ENCODE measurements at regions of chr2 and their contacts with region 1.

Region 1: GRCh38 chr2:85215448-85216401 is 82.5 kb downstream of the TCF7L1 start:
- DNase-seq: peak in 1 of 5 donors; percentile 41
- ATAC-seq: peak in 2 of 4 donors; percentile 55 to 62
- H3K4me3 ChIP-seq: no peak overlapping the region
- H3K27ac ChIP-seq: peak overlapping the region in 1 of 12 donors; percentile 65
- H3K4me1 ChIP-seq: peaks cover 0 to 45% (median 19%) of the 10 kb centered on the region in 12 donors
- H3K27me3 ChIP-seq: no peaks in the 10 kb centered on the region
- CTCF ChIP-seq: no peak
- POLR2A ChIP-seq: no peak

Region 2: DNA sequence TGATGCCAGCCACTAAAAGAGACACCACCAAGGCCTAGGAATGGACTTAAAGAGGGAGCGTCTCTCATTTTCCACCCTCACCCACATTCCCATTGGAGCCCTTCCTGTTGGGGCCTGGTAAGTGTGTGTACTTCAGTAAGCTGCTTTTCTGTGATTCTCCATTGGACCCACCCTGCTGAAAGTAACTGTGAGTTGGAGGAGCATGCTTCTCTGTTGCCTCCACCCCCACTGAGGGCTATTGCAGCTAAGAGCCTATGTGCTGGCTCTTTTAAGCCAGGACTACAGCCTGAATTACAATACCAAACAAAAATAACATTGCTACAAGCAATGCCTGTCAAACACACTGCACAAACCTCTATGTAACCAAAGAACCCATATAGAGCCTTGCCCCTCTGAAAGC is 416.0 kb before region 1 on chr2:
- intact Hi-C with region 1: loop called in 1 of 10 experiments (anchors 10 kb)
- DNase-seq: no peak
- ATAC-seq: no peak
- H3K4me3 ChIP-seq: no peak overlapping the region
- H3K27ac ChIP-seq: no peak overlapping the region
- H3K4me1 ChIP-seq: no peaks in the 10 kb centered on the region
- H3K27me3 ChIP-seq: no peaks in the 10 kb centered on the region
- CTCF ChIP-seq: no peak
- POLR2A ChIP-seq: no peak

Region 3: GRCh38 chr2:85132834-85133637 is 82.7 kb before region 1 on chr2 and contains the start of gene TCF7L1:
- intact Hi-C with region 1: no loop called
- DNase-seq: peak; percentile 82 to 91 (median 88)
- ATAC-seq: peak; percentile 95 to 97 (median 96)
- H3K4me3 ChIP-seq: peak within 1 kb of the TSS; percentile 61 to 99 (median 82)
- H3K27ac ChIP-seq: peak within 1 kb of the TSS; percentile 38 to 90 (median 81)
- H3K4me1 ChIP-seq: peaks cover 4 to 51% (median 31%) of the 10 kb centered on the region in 12 donors
- H3K27me3 ChIP-seq: peaks cover 0 to 26% (median 0%) of the 10 kb centered on the region in 9 donors
- CTCF ChIP-seq: peak; percentile 78 to 95 (median 89)
- POLR2A ChIP-seq: no peak
- total RNA-seq, gene TCF7L1: 1.9 to 9.8 (median 6.4) TPM

Region 4: DNA sequence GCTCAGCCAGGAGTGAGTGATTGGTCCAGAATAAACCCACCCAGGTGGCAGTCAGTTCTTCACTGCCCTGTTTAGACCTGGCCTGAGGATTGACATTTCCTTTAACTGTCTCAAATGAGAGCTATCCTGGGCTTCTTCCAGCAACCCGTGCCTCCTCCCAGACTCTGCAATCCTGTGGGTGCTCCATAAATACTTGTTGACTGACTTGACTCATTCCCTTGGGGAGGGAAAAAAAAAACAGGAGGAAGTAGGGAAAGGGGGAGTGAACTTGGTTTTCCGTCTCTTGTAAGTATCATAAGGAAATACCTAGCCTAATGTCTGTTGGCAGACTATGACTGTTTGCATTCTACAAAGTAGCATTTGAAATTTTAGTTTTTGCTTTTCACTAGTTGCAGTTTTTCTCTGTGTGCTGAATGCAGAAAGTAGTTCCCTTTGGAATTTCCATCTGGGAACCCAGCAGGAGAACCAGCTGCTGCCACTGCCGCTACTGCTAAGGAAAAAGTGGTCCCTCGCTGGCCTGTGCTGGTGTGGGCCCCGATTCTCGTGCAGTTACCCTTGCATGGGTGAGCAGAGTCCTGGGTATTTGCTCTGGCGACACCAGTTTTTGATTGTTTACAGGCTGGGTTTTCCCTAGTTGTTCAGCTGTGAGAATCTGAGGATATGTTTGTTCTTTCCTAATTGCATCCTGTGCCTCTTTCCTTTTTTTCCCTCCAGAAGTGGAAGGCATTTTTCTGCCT is 33.2 kb after region 1 on chr2:
- intact Hi-C with region 1: no loop called
- DNase-seq: peak in 1 of 5 donors; percentile 48
- ATAC-seq: peak in 3 of 4 donors; percentile 67 to 79 (median 70)
- H3K4me3 ChIP-seq: peak overlapping the region in 3 of 12 donors; percentile 5 to 28 (median 21)
- H3K27ac ChIP-seq: peak overlapping the region in 11 of 12 donors; percentile 43 to 80 (median 62)
- H3K4me1 ChIP-seq: peaks cover 14 to 79% (median 55%) of the 10 kb centered on the region in 12 donors
- H3K27me3 ChIP-seq: no peaks in the 10 kb centered on the region
- CTCF ChIP-seq: no peak
- POLR2A ChIP-seq: no peak